ENCODE measurements at regions of chr16 and their contacts with region 1.

Region 1: GRCh38 chr16:31073968-31074813 is at the starts of genes ZNF646 and ZNF668:
- DNase-seq: peak; percentile 99
- H3K4me3 Mint-ChIP-seq: peak within 1 kb of the TSS; percentile 98
- H3K27ac Mint-ChIP-seq: peak within 1 kb of the TSS; percentile 97
- H3K4me1 Mint-ChIP-seq: peaks cover 30% of the 10 kb centered on the region
- H3K27me3 Mint-ChIP-seq: no peaks in the 10 kb centered on the region
- total RNA-seq, gene ZNF646: 18.6 to 19.9 TPM
- total RNA-seq, gene ZNF668: 11.4 to 13.3 TPM

Region 2: DNA sequence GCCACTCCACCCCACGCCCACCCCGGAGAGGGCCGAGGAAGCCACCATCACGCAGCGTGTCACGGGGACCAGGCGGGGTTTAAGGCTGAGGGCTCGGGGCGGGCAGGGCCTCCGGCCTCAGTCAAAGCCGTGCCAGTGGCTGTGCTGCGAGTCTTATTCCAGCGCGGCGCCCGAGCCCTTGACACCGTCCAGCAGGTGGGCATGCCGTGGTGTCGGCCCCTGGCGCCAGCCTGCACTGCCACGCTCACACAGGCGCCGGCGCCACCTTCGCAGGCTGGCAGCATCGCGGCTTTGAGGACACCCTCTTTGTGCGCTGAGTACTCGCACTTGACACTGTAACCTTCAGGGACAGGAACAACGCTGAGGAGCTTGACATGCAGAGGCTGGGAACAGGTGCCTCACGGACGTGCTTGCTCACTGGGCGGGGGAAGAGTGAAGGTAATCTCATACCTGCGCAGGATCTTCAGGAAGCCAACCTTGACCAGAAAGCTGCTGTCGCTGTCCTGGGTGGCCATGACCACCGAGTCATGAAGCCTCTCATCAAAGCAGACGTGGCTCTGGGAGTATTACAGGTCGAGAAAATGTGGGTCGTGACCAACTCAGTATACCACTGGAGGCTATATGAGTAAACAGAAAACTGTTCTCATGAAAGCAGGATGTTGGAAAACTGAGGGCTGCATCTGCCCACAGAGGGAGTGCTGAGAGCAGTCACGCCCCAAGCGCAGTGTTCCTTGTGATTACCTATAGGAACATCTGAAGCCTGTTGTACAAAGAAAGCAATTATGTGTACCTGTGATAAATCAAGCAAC is 253.0 kb before region 1 on chr16:
- CTCF ChIA-PET with region 1: no interaction called
- POLR2A ChIA-PET with region 1: no interaction called
- intact Hi-C with region 1: no loop called
- DNase-seq: no peak
- H3K4me3 Mint-ChIP-seq: no peak overlapping the region
- H3K27ac Mint-ChIP-seq: no peak overlapping the region
- H3K4me1 Mint-ChIP-seq: no peaks in the 10 kb centered on the region
- H3K27me3 Mint-ChIP-seq: no peaks in the 10 kb centered on the region

Region 3: GRCh38 chr16:30984669-30985400 is 89.4 kb before region 1 on chr16 and contains the start of gene HSD3B7:
- CTCF ChIA-PET with region 1: interaction called, 18 read pairs
- POLR2A ChIA-PET with region 1: no interaction called
- intact Hi-C with region 1: no loop called
- DNase-seq: peak; percentile 88
- H3K4me3 Mint-ChIP-seq: no peak within 1 kb of the TSS
- H3K27ac Mint-ChIP-seq: no peak within 1 kb of the TSS
- H3K4me1 Mint-ChIP-seq: no peaks in the 10 kb centered on the region
- H3K27me3 Mint-ChIP-seq: no peaks in the 10 kb centered on the region
- total RNA-seq, gene HSD3B7: 2.2 TPM

Region 4: GRCh38 chr16:30997000-30997886 is 76.9 kb before region 1 on chr16:
- CTCF ChIA-PET with region 1: no interaction called
- POLR2A ChIA-PET with region 1: interaction called, 3 read pairs
- intact Hi-C with region 1: loop called (anchors 1 kb)
- DNase-seq: peak; percentile 90
- H3K4me3 Mint-ChIP-seq: peak overlapping the region; percentile 73
- H3K27ac Mint-ChIP-seq: no peak overlapping the region
- H3K4me1 Mint-ChIP-seq: peaks cover 12% of the 10 kb centered on the region
- H3K27me3 Mint-ChIP-seq: peaks cover 1% of the 10 kb centered on the region

Region 5: DNA sequence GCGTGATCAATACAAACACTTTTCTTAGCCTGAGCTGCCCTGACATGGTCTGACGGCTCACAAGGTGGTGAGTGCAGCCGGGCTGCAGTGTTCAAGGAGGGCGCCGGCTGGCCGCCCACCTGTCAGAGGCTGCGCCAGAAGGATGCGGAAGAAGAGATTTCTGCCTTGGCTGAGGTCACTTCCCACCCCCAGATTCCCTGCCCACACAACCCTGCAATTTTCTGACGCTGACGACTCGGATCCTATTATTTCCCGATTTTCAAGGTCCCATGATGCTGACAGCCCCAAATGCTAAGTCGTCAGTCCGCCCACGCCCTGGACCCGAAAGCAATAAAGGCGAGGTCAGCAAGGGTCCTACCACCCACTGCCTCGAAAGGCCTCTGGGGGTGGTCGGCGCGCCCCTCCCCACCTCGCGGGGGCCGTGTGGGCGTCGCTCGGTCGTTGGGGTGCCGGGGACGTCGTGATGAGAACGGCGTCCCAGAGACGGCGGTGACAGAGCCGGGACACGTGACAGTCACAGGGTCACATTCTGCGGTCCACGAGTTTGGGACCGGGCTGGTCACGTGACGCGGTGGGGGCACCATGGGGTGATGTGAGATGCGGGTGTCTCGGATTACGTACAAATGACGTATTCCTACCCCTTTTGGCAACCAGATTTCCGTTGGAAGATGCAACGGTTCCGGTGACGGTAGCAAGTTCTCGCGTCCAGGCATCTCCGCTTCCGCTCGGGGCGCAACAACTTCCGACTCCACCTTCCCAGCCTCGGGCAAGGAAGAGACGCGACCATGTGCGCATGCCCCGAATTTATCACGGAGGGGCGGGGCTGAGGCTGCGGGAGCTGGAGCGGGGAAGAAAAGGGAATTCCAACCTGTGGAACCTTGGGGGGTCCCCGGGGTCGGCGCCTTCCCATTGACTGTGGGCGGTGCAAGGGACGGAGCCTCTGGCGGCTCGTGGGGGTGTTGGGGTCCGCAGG is 41.2 kb before region 1 on chr16 and contains the start of gene STX4:
- CTCF ChIA-PET with region 1: no interaction called
- POLR2A ChIA-PET with region 1: interaction called, 5 read pairs
- intact Hi-C with region 1: loop called (anchors 1 kb)
- DNase-seq: peak; percentile 99
- H3K4me3 Mint-ChIP-seq: peak within 1 kb of the TSS; percentile 95
- H3K27ac Mint-ChIP-seq: peak within 1 kb of the TSS; percentile 93
- H3K4me1 Mint-ChIP-seq: peaks cover 16% of the 10 kb centered on the region
- H3K27me3 Mint-ChIP-seq: no peaks in the 10 kb centered on the region
- total RNA-seq, gene STX4: 46.7 to 46.8 TPM

Region 6: GRCh38 chr16:31094424-31095120 is 20.4 kb after region 1 on chr16 and contains the start of gene VKORC1:
- CTCF ChIA-PET with region 1: interaction called, 3 read pairs
- POLR2A ChIA-PET with region 1: interaction called, 16 read pairs
- intact Hi-C with region 1: loop called (anchors 1 kb)
- DNase-seq: peak; percentile 95
- H3K4me3 Mint-ChIP-seq: peak within 1 kb of the TSS; percentile 93
- H3K27ac Mint-ChIP-seq: peak within 1 kb of the TSS; percentile 84
- H3K4me1 Mint-ChIP-seq: peaks cover 24% of the 10 kb centered on the region
- H3K27me3 Mint-ChIP-seq: no peaks in the 10 kb centered on the region
- total RNA-seq, gene VKORC1: 67.3 to 72.3 TPM

Region 7: GRCh38 chr16:31117391-31118197 is 43.4 kb after region 1 on chr16 and contains the start of gene KAT8:
- CTCF ChIA-PET with region 1: interaction called, 3 read pairs
- POLR2A ChIA-PET with region 1: interaction called, 23 read pairs
- intact Hi-C with region 1: loop called (anchors 1 kb)
- DNase-seq: peak; percentile 99
- H3K4me3 Mint-ChIP-seq: peak within 1 kb of the TSS; percentile 79
- H3K27ac Mint-ChIP-seq: peak within 1 kb of the TSS; percentile 70
- H3K4me1 Mint-ChIP-seq: peaks cover 20% of the 10 kb centered on the region
- H3K27me3 Mint-ChIP-seq: no peaks in the 10 kb centered on the region
- total RNA-seq, gene KAT8: 48.8 to 49.6 TPM